ENCODE measurements at regions of chr6 and their contacts with region 1.

Region 1: DNA sequence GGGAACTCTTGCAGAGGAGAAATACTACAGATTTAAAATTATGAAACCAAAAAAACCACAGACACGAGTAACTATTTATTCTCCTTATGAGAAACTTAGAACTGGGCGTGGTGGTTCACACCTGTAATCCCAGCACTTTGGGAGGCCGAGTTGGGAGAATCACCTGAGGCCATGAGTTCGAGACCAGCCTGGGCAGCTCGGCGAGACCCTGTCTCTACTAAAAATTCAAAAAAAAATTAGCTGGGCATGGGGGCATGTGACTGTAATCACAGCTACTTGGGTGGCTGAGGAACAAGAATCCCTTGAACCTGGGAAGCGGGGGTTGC is 36.8 kb downstream of the SSR1 start:
- DNase-seq: peak; percentile 5
- H3K4me3 Mint-ChIP-seq: no peak overlapping the region
- H3K27ac Mint-ChIP-seq: no peak overlapping the region
- H3K4me1 Mint-ChIP-seq: peaks cover 3% of the 10 kb centered on the region
- H3K27me3 Mint-ChIP-seq: no peaks in the 10 kb centered on the region

Region 2: GRCh38 chr6:7389451-7390225 is 113.5 kb after region 1 on chr6 and contains the starts of genes CAGE1 and RIOK1:
- CTCF ChIA-PET with region 1: interaction called, 28 read pairs
- POLR2A ChIA-PET with region 1: no interaction called
- DNase-seq: peak; percentile 96
- H3K4me3 Mint-ChIP-seq: peak within 1 kb of the TSS; percentile 85
- H3K27ac Mint-ChIP-seq: peak within 1 kb of the TSS; percentile 94
- H3K4me1 Mint-ChIP-seq: peaks cover 41% of the 10 kb centered on the region
- H3K27me3 Mint-ChIP-seq: no peaks in the 10 kb centered on the region
- total RNA-seq, gene CAGE1: 0.08 TPM in 1 of 2 experiments, not detected in the other
- total RNA-seq, gene RIOK1: 23.4 to 27.0 TPM

Region 3: DNA sequence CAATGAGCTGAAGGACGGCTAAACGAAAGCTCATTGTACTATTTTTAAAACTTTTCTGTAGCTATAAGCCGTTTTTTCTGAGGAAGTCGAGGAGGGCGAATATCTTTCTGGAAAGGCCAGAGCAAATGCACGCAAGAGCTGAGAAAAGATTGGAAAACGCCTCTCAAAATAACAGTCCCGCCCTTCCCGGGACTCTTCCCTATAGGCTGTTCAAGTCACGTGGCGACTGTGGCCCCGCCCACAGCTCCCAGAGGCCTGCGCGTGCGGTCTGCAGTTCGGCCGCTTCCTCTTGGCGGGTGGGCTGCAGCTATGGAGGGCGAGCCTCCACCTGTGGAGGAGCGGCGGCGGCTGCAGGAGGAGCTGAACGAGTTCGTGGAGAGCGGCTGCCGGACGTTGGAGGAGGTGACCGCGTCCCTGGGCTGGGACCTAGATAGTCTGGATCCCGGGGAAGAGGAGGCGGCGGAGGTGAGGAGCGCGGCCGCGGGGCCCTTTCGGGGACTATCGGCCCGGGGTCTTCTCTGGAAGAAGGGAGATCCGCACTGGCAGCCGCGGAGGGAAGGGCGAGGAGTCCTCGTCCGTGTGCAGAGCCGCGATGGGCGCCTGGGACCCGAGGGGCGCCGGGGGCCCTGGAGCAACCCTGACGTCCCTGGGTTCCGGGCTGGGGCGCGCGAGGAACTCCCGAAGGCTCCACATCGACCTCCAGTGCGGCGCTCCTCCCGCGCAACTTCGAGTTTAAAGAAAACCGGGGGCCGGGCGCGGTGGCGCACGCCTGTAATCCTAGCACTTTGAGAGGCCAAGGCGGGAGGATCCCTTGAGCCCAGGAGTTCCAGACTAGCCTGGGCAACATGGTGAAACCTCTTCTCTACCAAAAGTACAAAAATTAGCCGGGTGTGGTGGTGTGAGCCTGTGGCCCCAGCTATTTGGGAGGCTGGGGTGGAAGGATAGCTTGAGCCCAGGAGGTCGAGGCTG is 314.1 kb after region 1 on chr6 and contains the start of gene SNRNP48:
- CTCF ChIA-PET with region 1: interaction called, 12 read pairs
- POLR2A ChIA-PET with region 1: no interaction called
- DNase-seq: peak; percentile 92
- H3K4me3 Mint-ChIP-seq: peak within 1 kb of the TSS; percentile 99
- H3K27ac Mint-ChIP-seq: peak within 1 kb of the TSS; percentile 90
- H3K4me1 Mint-ChIP-seq: peaks cover 35% of the 10 kb centered on the region
- H3K27me3 Mint-ChIP-seq: no peaks in the 10 kb centered on the region
- total RNA-seq, gene SNRNP48: 16.5 TPM

Region 4: DNA sequence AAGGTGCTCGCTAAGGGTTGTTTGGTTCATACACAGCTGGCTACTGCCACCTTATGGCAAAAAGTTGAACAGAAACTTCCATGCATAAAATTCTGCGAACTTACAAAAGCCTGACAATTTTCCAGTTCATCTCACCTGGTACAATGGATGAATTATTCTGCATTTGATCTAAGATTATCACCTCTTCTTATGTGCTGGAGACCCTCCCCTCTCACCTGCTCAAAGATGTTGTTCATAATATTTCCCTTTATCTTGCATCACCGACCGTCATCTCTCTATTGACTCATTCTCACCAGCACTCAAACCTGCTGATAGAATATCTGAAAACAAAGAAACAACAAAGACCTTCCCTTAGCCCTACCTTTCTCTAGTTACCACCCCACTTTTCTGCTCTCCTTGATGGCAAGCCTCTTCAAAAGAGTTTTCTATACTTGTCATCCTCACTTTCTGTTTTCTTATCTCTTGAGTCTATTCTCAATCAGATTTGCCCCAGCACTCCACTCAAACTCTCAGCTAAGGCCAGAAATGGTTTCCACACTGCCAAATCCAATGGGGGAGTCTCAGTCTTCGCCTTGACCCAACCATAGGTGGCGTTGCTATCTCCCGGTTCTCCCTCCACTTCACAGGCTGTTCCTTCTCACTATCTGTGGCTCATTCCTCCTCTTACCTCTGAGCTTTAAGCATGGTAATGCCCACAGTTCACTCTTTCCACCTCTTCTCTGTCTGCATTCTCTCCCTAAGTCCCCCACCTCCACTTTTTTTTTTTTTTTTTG is 339.6 kb after region 1 on chr6:
- CTCF ChIA-PET with region 1: interaction called, 59 read pairs
- POLR2A ChIA-PET with region 1: interaction called, 4 read pairs
- DNase-seq: peak; percentile 37
- H3K4me3 Mint-ChIP-seq: no peak overlapping the region
- H3K27ac Mint-ChIP-seq: no peak overlapping the region
- H3K4me1 Mint-ChIP-seq: peaks cover 16% of the 10 kb centered on the region
- H3K27me3 Mint-ChIP-seq: peaks cover 5% of the 10 kb centered on the region

Measured in activated CD4-positive, alpha-beta memory T cell treated with anti-CD3 and anti-CD28 coated beads, Interleukin-2, amount 10 ng/mL, durations not matched to agents 7 days and 5 days (primary cell).